ENCODE measurements at regions of chr2 and their contacts with region 1.

Region 1: GRCh38 chr2:201451292-201452057 is at the starts of genes STRADB and TRAK2:
- DNase-seq: peak; percentile 98
- ATAC-seq: peak; percentile 97
- H3K4me3 ChIP-seq: peak within 1 kb of the TSS; percentile 89 to 98
- H3K27ac ChIP-seq: peak within 1 kb of the TSS in 1 of 2 donors; percentile 77
- H3K4me1 ChIP-seq: peaks cover 6 to 8% of the 10 kb centered on the region in 2 donors
- H3K27me3 ChIP-seq: no peaks in the 10 kb centered on the region
- total RNA-seq, gene STRADB: 15.7 to 17.7 TPM
- total RNA-seq, gene TRAK2: 84.7 to 119 TPM

Region 2: GRCh38 chr2:201383156-201383555 is 68.3 kb before region 1 on chr2:
- intact Hi-C with region 1: no loop called
- DNase-seq: no peak
- ATAC-seq: no peak
- H3K4me3 ChIP-seq: no peak overlapping the region
- H3K27ac ChIP-seq: no peak overlapping the region
- H3K4me1 ChIP-seq: no peaks in the 10 kb centered on the region
- H3K27me3 ChIP-seq: no peaks in the 10 kb centered on the region

Region 3: DNA sequence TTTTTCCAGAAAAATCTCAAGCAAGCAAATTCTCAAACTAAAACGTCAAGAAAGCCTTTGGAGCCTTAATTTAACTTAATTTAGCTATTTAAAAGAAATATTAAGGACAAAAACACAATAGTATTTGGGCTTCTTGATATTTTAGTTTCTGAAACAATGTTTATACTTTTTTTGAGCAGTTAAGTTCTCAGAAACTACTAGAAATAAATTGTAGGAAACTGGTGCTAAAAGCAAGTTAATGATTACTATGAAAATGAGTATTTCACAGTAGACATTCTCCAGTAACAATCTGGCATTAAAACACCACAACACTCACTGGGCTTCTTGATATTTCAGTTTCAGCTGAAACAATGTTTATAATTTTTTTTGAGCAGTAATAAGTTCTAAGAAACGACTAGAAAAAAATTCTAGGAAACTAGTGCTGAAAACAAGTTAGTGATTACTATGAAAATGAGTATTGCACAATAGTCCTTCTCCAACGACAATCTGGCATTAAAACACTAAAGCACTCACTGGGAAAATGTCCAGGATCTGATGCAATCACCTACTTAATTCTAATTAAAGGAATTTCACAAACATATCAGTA is 45.3 kb before region 1 on chr2:
- intact Hi-C with region 1: loop called (anchors 2 to 5 kb)
- DNase-seq: no peak
- ATAC-seq: peak; percentile 74
- H3K4me3 ChIP-seq: no peak overlapping the region
- H3K27ac ChIP-seq: no peak overlapping the region
- H3K4me1 ChIP-seq: peaks cover 2 to 5% of the 10 kb centered on the region in 2 donors
- H3K27me3 ChIP-seq: no peaks in the 10 kb centered on the region

Region 4: DNA sequence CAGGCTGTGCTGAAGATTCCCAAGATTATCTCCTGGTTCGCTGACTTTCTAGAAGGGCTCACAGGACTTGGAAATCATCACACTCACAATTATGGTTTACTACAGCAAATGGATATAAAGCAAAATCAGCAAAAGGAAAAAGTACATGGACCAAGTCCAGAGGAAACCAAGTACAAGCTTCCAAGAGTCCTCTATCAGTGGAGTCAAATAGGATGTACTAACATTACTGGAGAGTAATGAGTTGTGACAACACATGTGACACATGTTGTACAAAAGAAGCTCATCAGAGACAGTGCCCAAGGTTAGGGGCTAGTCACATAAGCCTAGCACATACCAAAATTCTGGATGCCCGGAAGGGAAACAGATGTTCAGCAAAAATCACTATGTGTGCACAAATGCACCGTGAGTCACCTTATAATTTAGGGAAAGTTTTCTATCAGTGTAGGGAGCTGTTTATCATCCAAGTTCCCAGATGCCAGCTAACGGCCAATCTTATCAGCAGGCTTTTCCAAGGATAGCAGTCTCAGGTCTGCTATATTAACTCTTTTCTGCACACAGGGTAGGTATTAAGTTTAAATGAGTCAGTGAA is 182.3 kb after region 1 on chr2:
- intact Hi-C with region 1: loop called in 1 of 2 experiments (anchors 10 kb)
- DNase-seq: no peak
- ATAC-seq: no peak
- H3K4me3 ChIP-seq: no peak overlapping the region
- H3K27ac ChIP-seq: no peak overlapping the region
- H3K4me1 ChIP-seq: no peaks in the 10 kb centered on the region
- H3K27me3 ChIP-seq: no peaks in the 10 kb centered on the region